GM12878 (cell line): ENCODE measurements at regions of chr5 and their contacts with region 1.

Region 1: DNA sequence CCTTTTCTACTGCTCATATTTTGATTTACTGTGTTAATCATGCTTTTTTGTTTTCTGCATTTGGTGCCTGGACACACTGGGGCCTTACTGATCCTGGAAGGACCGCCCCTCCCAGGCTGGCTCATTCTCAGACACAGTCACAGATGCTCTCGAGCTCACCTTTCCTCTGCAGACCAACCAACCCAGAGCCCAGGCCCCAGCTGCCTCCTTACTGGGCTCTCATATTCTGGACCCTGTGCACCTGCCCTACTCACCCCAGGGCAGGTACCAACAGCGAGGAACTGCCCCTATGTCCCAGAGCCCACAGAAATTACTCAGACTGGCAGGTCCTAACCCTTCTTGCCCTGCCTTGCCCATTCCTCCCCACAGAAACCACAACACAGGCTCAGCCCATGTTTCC is 6.6 kb upstream of the OR2V2 start:
- DNase-seq: no peak
- ATAC-seq: no peak
- H3K4me3 ChIP-seq: no peak overlapping the region
- H3K27ac ChIP-seq: no peak overlapping the region
- H3K4me1 ChIP-seq: no peaks in the 10 kb centered on the region
- H3K27me3 ChIP-seq: no peaks in the 10 kb centered on the region; a peak in 2 of 4 replicates
- CTCF ChIP-seq: no peak
- EP300 ChIP-seq: no peak
- POLR2A ChIP-seq: no peak
- RAD21 ChIP-seq: no peak

Region 2: DNA sequence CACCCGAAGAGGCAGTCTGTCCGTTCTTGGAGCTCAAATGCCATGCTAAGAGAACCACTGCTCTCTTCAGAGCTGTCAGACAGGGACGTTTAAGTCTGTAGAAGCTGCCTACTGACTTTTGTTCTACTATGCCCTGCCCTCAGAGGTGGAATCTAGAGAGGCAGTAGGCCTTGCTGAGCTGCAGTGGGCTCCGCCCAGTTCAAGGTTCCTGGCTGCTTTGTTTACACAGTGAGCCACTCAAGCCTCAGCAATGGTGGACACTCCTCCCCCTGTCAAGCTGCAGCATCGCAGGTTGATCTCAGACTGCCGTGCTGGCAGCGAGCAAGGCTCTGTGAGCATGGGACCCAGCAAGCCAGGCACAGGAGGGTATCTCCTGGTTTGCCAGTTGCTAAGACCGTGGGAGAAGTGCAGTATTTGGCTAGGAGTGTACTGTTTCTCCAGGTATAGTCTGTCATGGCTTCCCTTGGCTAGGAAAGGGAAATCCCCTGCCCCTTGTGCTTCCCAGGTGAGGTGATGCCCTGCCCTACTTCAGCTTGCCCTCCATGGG is 254.8 kb before region 1 on chr5:
- CTCF ChIA-PET with region 1: no interaction called
- POLR2A ChIA-PET with region 1: no interaction called
- RAD21 ChIA-PET with region 1: no interaction called
- SMC1A ChIA-PET with region 1: no interaction called
- in situ Hi-C with region 1: no loop called
- intact Hi-C with region 1: no loop called
- DNase-seq: no peak
- ATAC-seq: no peak
- H3K4me3 ChIP-seq: no peak overlapping the region
- H3K27ac ChIP-seq: no peak overlapping the region
- H3K4me1 ChIP-seq: no peaks in the 10 kb centered on the region
- H3K27me3 ChIP-seq: no peaks in the 10 kb centered on the region
- CTCF ChIP-seq: no peak
- EP300 ChIP-seq: no peak
- POLR2A ChIP-seq: no peak
- RAD21 ChIP-seq: no peak

Region 3: GRCh38 chr5:181114844-181115778 is 25.7 kb before region 1 on chr5:
- CTCF ChIA-PET with region 1: no interaction called
- POLR2A ChIA-PET with region 1: no interaction called
- RAD21 ChIA-PET with region 1: no interaction called
- SMC1A ChIA-PET with region 1: no interaction called
- in situ Hi-C with region 1: no loop called
- intact Hi-C with region 1: no loop called
- DNase-seq: no peak
- ATAC-seq: no peak
- H3K4me3 ChIP-seq: no peak overlapping the region
- H3K27ac ChIP-seq: no peak overlapping the region
- H3K4me1 ChIP-seq: no peaks in the 10 kb centered on the region
- H3K27me3 ChIP-seq: peaks cover 0 to 3% of the 10 kb centered on the region in 2 experiments; a peak in 2 of 4 replicates
- CTCF ChIP-seq: no peak
- EP300 ChIP-seq: no peak
- POLR2A ChIP-seq: no peak
- RAD21 ChIP-seq: no peak

Region 4: DNA sequence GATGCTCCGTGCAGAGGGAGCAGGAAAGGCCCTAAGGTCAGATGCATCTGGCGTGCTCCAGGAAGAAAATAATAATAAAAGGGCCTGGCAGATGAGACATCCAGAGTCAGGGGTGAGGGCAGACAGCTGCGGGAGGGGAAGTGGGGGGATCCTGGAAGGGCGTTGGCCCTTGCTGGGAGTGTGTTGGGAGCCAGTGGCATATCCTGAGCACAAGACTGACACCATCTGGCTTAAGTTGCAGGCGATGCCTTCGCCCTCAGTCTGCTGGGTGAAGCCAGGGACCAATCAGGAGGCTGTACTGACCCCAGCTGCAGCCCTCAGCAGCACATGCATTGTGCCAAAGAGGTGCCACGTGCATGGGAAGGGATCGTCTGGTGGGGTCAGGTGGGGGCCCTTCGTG is 10.4 kb after region 1 on chr5:
- CTCF ChIA-PET with region 1: interaction called, 13 read pairs
- POLR2A ChIA-PET with region 1: interaction called, 6 read pairs
- RAD21 ChIA-PET with region 1: interaction called, 9 read pairs
- SMC1A ChIA-PET with region 1: interaction called, 22 read pairs
- in situ Hi-C with region 1: no loop called
- intact Hi-C with region 1: no loop called
- DNase-seq: no peak
- ATAC-seq: peak; percentile 40
- H3K4me3 ChIP-seq: no peak overlapping the region
- H3K27ac ChIP-seq: no peak overlapping the region
- H3K4me1 ChIP-seq: 0 out of 2 replicates have a peak, but pooled peaks cover 6% of the 10 kb centered on the region
- H3K27me3 ChIP-seq: no peaks in the 10 kb centered on the region
- CTCF ChIP-seq: peak in 1 of 3 experiments; percentile 19; a peak in 1 of 6 replicates
- EP300 ChIP-seq: no peak
- POLR2A ChIP-seq: no peak
- RAD21 ChIP-seq: no peak